ENCODE measurements at regions of chr1 and their contacts with region 1.

Region 1: DNA sequence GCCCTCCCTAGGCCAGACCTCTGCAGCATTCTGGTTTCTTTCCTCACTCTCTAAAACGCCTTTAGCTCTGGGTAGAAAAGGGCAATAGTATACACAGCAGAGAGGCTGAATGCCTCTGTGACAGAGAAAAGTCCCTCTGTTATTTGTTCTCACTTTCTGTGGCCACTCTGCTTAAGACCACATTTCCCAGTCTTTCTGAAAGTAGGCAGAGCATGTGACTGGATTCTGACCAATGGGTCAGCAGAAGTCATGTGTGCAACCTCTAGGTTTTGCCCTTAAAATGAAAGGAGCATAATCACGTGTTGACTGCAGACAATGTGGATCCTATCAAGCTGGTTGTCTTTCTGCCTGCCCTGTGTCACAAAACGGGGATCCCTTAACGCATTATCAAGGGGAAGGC is 79.7 kb upstream of the MARK1 start:
- DNase-seq: no peak
- ATAC-seq: no peak
- H3K4me3 ChIP-seq: no peak overlapping the region
- H3K27ac ChIP-seq: no peak overlapping the region
- H3K4me1 ChIP-seq: no peaks in the 10 kb centered on the region
- H3K27me3 ChIP-seq: 0 out of 2 replicates have a peak, but pooled peaks cover 3% of the 10 kb centered on the region
- CTCF ChIP-seq: no peak
- POLR2A ChIP-seq: no peak
- RAD21 ChIP-seq: no peak

Region 2: DNA sequence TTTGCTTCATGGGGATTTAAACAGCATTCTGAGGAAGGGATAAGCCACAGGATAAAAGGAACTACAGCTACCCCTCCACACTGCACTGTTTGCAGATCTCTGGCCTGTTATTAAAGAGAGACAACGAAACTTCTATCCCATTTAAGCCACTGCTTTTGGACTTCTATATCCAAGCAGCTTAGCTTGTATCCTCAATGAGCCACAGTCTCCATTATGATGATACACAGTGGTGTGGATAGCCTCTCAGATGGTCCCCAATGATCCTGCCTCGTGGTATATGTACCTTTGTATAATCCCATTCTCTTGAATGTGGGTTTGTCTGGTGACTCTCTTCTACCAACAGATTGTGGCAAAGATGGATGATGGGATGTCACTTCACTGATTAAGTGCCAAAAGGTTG is 43.7 kb after region 1 on chr1:
- CTCF ChIA-PET with region 1: no interaction called
- POLR2A ChIA-PET with region 1: no interaction called
- RAD21 ChIA-PET with region 1: no interaction called
- intact Hi-C with region 1: loop called (anchors 2 kb)
- DNase-seq: no peak
- ATAC-seq: no peak
- H3K4me3 ChIP-seq: no peak overlapping the region
- H3K27ac ChIP-seq: no peak overlapping the region
- H3K4me1 ChIP-seq: peaks cover 0 to 7% of the 10 kb centered on the region in 2 experiments; a peak in 2 of 4 replicates
- H3K27me3 ChIP-seq: no peaks in the 10 kb centered on the region
- CTCF ChIP-seq: no peak
- POLR2A ChIP-seq: no peak
- RAD21 ChIP-seq: no peak